AG04449 (cell line): ENCODE measurements at regions of chr6 and their contacts with region 1.

Region 1: GRCh38 chr6:4358414-4359114 is 223.2 kb upstream of the ECI2 start:
- DNase-seq: peak; percentile 99
- H3K4me3 ChIP-seq: peak overlapping the region; percentile 21; the same call in 1 of the 2 replicates
- CTCF ChIP-seq: no peak

Region 2: GRCh38 chr6:4370066-4370465 is 11.5 kb after region 1 on chr6:
- CTCF ChIA-PET with region 1: interaction called, 10 read pairs
- POLR2A ChIA-PET with region 1: interaction called, 14 read pairs
- DNase-seq: peak; percentile 87
- H3K4me3 ChIP-seq: peak overlapping the region; percentile 35
- CTCF ChIP-seq: no peak

Region 3: GRCh38 chr6:4472969-4473642 is 114.5 kb after region 1 on chr6:
- CTCF ChIA-PET with region 1: no interaction called
- POLR2A ChIA-PET with region 1: no interaction called
- DNase-seq: no peak
- H3K4me3 ChIP-seq: no peak overlapping the region
- CTCF ChIP-seq: no peak